ENCODE measurements at regions of chr14 and their contacts with region 1.

Region 1: GRCh38 chr14:73731111-73731510 is 16.9 kb upstream of the PNMA1 start:
- DNase-seq: peak in 1 of 2 donors; percentile 37
- H3K4me3 ChIP-seq: no peak overlapping the region
- H3K27ac ChIP-seq: peak overlapping the region; percentile 51 to 93 (median 88)
- H3K4me1 ChIP-seq: peaks cover 30 to 66% (median 54%) of the 10 kb centered on the region in 4 donors
- H3K27me3 ChIP-seq: no peaks in the 10 kb centered on the region
- CTCF ChIP-seq: peak in 1 of 7 experiments; percentile 27
- EP300 ChIP-seq: no peak
- POLR2A ChIP-seq: no peak

Region 2: GRCh38 chr14:73789691-73790581 is 58.8 kb after region 1 on chr14:
- intact Hi-C with region 1: loop called (anchors 10 kb)
- DNase-seq: peak in 1 of 2 donors; percentile 93
- H3K4me3 ChIP-seq: no peak overlapping the region
- H3K27ac ChIP-seq: peak overlapping the region; percentile 68 to 100 (median 98)
- H3K4me1 ChIP-seq: peaks cover 42 to 67% (median 51%) of the 10 kb centered on the region in 4 donors
- H3K27me3 ChIP-seq: no peaks in the 10 kb centered on the region
- CTCF ChIP-seq: no peak
- EP300 ChIP-seq: peak; percentile 92
- POLR2A ChIP-seq: no peak

Region 3: GRCh38 chr14:73825551-73826188 is 94.6 kb after region 1 on chr14:
- intact Hi-C with region 1: loop called (anchors 2 kb)
- DNase-seq: peak; percentile 94 to 97
- H3K4me3 ChIP-seq: no peak overlapping the region
- H3K27ac ChIP-seq: peak overlapping the region in 1 of 5 donors; percentile 12
- H3K4me1 ChIP-seq: peaks cover 0 to 13% (median 7%) of the 10 kb centered on the region in 4 donors
- H3K27me3 ChIP-seq: no peaks in the 10 kb centered on the region
- CTCF ChIP-seq: peak in 5 of 7 experiments; percentile 71 to 93 (median 90)
- EP300 ChIP-seq: no peak
- POLR2A ChIP-seq: no peak

Measured in stomach (tissue), 19 donors.